HCT116 (cell line): ENCODE measurements at regions of chr10 and their contacts with region 1.

Region 1: GRCh38 chr10:9331583-9332008 is 1277.1 kb downstream of the GATA3 start:
- DNase-seq: peak; percentile 19
- ATAC-seq: no peak
- H3K4me3 ChIP-seq: no peak overlapping the region
- H3K27ac ChIP-seq: no peak overlapping the region
- H3K4me1 ChIP-seq: no peaks in the 10 kb centered on the region
- H3K27me3 ChIP-seq: no peaks in the 10 kb centered on the region
- CTCF ChIP-seq: peak; percentile 22 to 75 (median 57); a peak in 5 of 6 replicates
- POLR2A ChIP-seq: no peak
- RAD21 ChIP-seq: peak; percentile 66

Region 2: DNA sequence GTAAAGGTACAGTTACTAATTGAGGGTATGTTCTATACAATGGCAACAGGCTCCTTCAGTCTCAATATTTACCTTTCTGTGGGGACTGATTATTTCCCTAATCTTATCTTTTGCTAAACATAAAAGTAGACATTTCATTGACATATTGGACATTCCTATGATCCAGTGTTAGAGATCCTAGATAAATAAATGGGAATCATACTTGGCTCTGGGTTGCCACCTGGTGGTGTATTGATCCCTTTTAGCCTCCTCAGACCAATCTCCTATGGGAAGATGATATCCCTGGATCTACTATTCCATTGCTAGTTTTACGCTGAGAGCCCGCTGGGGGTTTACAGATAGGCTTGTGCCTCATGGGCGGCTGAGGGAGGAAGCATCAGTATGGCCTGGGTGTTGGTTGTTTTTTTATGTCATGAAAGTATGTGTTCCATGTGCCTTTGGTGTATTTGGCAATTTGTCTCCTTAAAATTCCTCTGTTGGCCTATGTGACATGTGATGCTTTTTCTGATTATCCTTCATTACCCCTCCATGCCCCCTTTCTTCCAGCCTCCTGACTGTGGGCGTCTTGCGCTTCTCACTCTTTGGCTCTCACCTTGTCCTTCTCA is 1704.9 kb after region 1 on chr10:
- CTCF ChIA-PET with region 1: no interaction called
- POLR2A ChIA-PET with region 1: no interaction called
- RAD21 ChIA-PET with region 1: no interaction called
- intact Hi-C with region 1: loop called (anchors 2 kb)
- DNase-seq: no peak
- ATAC-seq: peak; percentile 53; the same call in 1 of the 2 replicates
- H3K4me3 ChIP-seq: no peak overlapping the region
- H3K27ac ChIP-seq: no peak overlapping the region
- H3K4me1 ChIP-seq: no peaks in the 10 kb centered on the region
- H3K27me3 ChIP-seq: no peaks in the 10 kb centered on the region
- CTCF ChIP-seq: peak in 2 of 3 experiments; percentile 38 to 43; a peak in 4 of 6 replicates
- POLR2A ChIP-seq: no peak
- RAD21 ChIP-seq: peak; percentile 32